Cardiac septum (tissue), 1 donor: ENCODE measurements at regions of chr5 and their contacts with region 1.

Region 1: DNA sequence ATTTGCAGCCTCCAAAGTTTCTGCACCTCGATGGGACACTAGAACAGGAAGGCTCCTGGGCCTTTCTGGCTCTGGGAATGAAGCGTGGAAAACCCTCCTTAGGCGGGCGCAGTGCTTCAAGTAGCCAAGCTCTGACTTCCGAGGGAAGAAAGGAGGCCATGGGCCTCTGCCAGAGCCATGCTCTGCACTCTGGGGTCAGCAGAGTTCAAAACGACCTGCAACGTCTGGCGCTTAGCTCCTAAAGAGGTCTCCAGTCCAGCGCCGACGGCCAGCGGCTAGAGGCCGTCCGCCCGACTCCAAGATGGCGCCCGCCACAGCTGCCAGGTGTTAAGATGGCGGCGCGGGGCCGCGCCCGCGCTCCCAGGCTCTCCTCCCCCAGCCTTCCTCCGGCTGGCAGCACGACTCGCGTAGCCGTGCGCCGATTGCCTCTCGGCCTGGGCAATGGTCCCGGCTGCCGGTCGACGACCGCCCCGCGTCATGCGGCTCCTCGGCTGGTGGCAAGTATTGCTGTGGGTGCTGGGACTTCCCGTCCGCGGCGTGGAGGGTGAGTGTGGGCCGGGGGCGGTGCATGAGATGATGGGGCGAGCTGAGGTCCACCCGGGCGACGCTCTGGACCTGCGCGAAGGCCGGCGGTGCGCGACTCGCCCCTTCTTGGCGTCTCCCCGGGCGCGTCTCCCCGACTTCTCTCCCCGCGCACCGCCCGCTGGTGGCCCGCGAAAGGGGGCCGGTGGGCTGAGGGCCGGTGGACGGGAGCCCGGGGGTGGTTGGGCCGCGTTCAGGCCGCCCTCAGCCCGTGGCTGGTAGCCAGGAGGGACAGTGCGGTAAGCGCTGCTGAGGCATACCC is at the start of gene TXNDC15:
- DNase-seq: peak; percentile 96
- total RNA-seq, gene TXNDC15: 46.6 TPM

Region 2: DNA sequence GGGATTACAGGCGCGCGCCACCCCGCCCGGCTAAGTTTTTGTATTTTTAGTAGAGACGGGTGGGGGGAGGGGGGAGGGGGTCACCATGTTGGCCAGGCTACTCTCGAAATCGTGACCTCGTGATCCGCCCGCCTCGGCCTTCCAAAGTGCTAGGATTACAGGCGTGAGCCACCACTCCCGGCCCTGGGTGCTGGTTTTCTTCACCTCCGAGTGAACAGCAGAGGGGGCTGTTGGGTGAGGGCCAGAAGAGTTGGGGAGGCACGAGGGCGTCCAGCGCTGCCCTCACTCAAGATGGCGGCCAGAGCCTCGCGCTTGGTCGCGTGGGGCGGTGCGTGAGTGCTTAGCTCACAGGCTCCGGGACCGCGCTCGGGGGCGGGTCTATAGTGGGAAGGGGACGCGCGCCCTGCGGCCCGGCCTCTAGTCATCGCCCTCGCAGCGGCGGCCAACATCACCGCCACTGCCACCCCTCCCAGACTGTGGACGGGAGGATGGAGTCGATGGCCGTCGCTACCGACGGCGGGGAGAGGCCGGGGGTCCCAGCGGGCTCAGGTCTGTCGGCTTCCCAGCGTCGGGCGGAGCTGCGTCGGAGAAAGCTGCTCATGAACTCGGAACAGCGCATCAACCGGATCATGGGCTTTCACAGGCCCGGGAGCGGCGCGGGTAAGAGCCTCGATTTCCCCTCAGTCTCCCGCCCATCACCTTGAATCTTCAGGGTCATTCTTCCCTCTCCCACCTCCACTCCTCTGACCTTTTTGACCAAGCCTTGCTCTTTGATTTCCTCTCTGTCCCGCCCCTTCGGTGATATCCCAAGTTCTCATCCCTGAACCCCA is 135.9 kb before region 1 on chr5 and contains the start of gene CAMLG:
- intact Hi-C with region 1: loop called (anchors 10 kb)
- DNase-seq: peak; percentile 99
- total RNA-seq, gene CAMLG: 18.7 TPM

Region 3: GRCh38 chr5:134845852-134846640 is 28.2 kb before region 1 on chr5 and contains the start of gene C5orf24:
- intact Hi-C with region 1: loop called (anchors 1 kb)
- DNase-seq: peak; percentile 96
- total RNA-seq, gene C5orf24: 26.6 TPM

Region 4: DNA sequence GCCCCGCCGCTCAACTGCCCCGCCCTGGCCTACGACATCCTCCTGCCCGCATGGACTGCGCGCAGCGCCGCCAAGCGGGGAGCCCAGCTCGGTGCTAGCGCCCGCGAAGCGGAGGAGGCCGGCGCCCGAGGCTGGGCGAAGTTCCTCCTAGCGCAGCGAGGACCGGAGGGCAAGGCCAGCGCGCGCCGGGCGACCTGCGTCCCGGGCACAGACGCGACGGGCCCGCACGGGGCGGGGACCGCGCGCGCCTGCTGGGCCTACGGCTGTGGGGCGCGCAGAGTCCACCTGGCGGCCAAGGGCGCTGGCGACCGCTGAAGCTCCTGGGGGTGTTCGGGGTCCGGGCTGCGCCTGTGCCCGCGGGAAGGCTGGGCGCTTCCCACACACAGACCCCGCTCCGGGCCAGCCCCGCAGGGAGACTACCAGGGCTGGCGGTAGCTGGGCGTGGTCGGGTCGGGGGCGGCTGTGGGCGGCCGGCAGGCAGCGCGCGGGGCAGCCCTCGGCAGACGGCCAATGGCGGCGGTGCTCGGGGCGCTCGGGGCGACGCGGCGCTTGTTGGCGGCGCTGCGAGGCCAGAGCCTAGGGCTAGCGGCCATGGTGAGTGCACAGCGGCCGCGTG is 30.5 kb after region 1 on chr5 and contains the start of gene PCBD2:
- intact Hi-C with region 1: loop called (anchors 1 kb)
- DNase-seq: peak; percentile 96
- total RNA-seq, gene PCBD2: 21.2 TPM